PC-9 (cell line): ENCODE measurements at regions of chr1 and their contacts with region 1.

Region 1: GRCh38 chr1:44674113-44675000 is at the starts of genes ARMH1 and TMEM53:
- DNase-seq: peak; percentile 98 to 100
- H3K4me3 ChIP-seq: peak within 1 kb of the TSS; percentile 81
- H3K27ac ChIP-seq: peak within 1 kb of the TSS; percentile 89
- H3K4me1 ChIP-seq: peaks cover 54% of the 10 kb centered on the region
- H3K27me3 ChIP-seq: no peaks in the 10 kb centered on the region
- CTCF ChIP-seq: no peak
- total RNA-seq, gene ARMH1: 16.3 and 16.9 TPM in 2 replicates
- total RNA-seq, gene TMEM53: 33.2 and 36.1 TPM in 2 replicates

Region 2: GRCh38 chr1:44029906-44030604 is 644.3 kb before region 1 on chr1:
- CTCF ChIA-PET with region 1: no interaction called
- POLR2A ChIA-PET with region 1: no interaction called
- intact Hi-C with region 1: loop called (anchors 1 kb)
- DNase-seq: peak; percentile 80 to 93
- H3K4me3 ChIP-seq: peak overlapping the region; percentile 97
- H3K27ac ChIP-seq: peak overlapping the region; percentile 91
- H3K4me1 ChIP-seq: peaks cover 57% of the 10 kb centered on the region
- H3K27me3 ChIP-seq: no peaks in the 10 kb centered on the region
- CTCF ChIP-seq: no peak

Region 3: GRCh38 chr1:44354840-44355581 is 319.3 kb before region 1 on chr1 and contains the start of gene ERI3:
- CTCF ChIA-PET with region 1: no interaction called
- POLR2A ChIA-PET with region 1: interaction called, 12 read pairs
- intact Hi-C with region 1: no loop called
- DNase-seq: peak; percentile 92 to 98
- H3K4me3 ChIP-seq: peak within 1 kb of the TSS; percentile 99
- H3K27ac ChIP-seq: 0 out of 2 replicates have a peak within 1 kb of the TSS, but pooled peaks have one; percentile 40
- H3K4me1 ChIP-seq: peaks cover 26% of the 10 kb centered on the region; the same call in 1 of the 2 replicates
- H3K27me3 ChIP-seq: no peaks in the 10 kb centered on the region
- CTCF ChIP-seq: no peak
- total RNA-seq, gene ERI3: 120 and 133 TPM in 2 replicates

Region 4: GRCh38 chr1:44484155-44484688 is 190.1 kb before region 1 on chr1:
- CTCF ChIA-PET with region 1: no interaction called
- POLR2A ChIA-PET with region 1: no interaction called
- intact Hi-C with region 1: no loop called
- DNase-seq: no peak
- H3K4me3 ChIP-seq: no peak overlapping the region
- H3K27ac ChIP-seq: no peak overlapping the region
- H3K4me1 ChIP-seq: peaks cover 22% of the 10 kb centered on the region
- H3K27me3 ChIP-seq: no peaks in the 10 kb centered on the region
- CTCF ChIP-seq: no peak

Region 5: DNA sequence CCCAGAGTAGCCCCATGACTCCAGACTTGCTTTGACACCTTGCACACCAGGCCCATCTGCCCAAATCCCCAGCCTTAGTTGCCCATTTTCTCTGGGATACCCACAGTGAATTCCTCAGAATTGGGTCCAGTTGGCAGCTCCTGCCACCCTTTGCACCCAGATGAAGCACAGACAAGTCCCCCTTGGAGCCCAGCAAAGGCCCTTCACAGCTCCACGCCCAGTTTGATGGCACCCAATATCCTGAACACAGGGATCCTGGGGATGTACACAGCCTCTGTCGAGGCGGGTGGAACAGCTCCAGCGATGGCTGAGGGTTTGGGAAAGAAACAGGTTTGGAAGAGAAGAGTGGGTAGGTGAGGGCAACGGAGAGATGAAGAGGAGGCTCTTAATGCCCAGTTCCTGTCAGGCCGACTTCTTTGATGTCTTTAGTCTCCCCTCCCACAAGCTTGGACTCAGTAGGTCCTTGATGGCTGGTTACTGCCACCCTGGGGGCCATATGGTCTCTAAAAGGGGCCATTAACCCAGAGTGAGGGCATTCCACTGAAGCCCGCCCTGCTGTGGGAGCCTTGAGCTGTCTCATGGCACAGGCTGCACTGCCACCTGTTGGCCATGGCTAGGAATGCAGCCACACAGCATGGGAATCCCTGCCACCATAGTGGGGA is 21.8 kb before region 1 on chr1:
- CTCF ChIA-PET with region 1: interaction called, 6 read pairs
- POLR2A ChIA-PET with region 1: no interaction called
- intact Hi-C with region 1: loop called (anchors 2 kb)
- DNase-seq: peak; percentile 50 to 79
- H3K4me3 ChIP-seq: no peak overlapping the region
- H3K27ac ChIP-seq: no peak overlapping the region
- H3K4me1 ChIP-seq: no peaks in the 10 kb centered on the region
- H3K27me3 ChIP-seq: no peaks in the 10 kb centered on the region
- CTCF ChIP-seq: peak; percentile 95

Region 6: GRCh38 chr1:44721485-44722361 is 47.4 kb after region 1 on chr1:
- CTCF ChIA-PET with region 1: no interaction called
- POLR2A ChIA-PET with region 1: interaction called, 39 read pairs
- intact Hi-C with region 1: no loop called
- DNase-seq: peak; percentile 70 to 97
- H3K4me3 ChIP-seq: peak overlapping the region; percentile 21; the same call in 1 of the 2 replicates
- H3K27ac ChIP-seq: peak overlapping the region; percentile 89
- H3K4me1 ChIP-seq: peaks cover 26% of the 10 kb centered on the region
- H3K27me3 ChIP-seq: no peaks in the 10 kb centered on the region
- CTCF ChIP-seq: no peak

Region 7: GRCh38 chr1:44807262-44808062 is 133.1 kb after region 1 on chr1 and contains the start of gene DYNLT4:
- CTCF ChIA-PET with region 1: no interaction called
- POLR2A ChIA-PET with region 1: no interaction called
- intact Hi-C with region 1: loop called (anchors 2 kb)
- DNase-seq: peak; percentile 99
- H3K4me3 ChIP-seq: peak within 1 kb of the TSS; percentile 30; the same call in 1 of the 2 replicates
- H3K27ac ChIP-seq: peak within 1 kb of the TSS; percentile 98
- H3K4me1 ChIP-seq: peaks cover 95% of the 10 kb centered on the region
- H3K27me3 ChIP-seq: no peaks in the 10 kb centered on the region
- CTCF ChIP-seq: no peak
- total RNA-seq, gene DYNLT4: 2.8 and 4.3 TPM in 2 replicates